Left colon (tissue), 2 donors: ENCODE measurements at regions of chr7 and their contacts with region 1.

Region 1: DNA sequence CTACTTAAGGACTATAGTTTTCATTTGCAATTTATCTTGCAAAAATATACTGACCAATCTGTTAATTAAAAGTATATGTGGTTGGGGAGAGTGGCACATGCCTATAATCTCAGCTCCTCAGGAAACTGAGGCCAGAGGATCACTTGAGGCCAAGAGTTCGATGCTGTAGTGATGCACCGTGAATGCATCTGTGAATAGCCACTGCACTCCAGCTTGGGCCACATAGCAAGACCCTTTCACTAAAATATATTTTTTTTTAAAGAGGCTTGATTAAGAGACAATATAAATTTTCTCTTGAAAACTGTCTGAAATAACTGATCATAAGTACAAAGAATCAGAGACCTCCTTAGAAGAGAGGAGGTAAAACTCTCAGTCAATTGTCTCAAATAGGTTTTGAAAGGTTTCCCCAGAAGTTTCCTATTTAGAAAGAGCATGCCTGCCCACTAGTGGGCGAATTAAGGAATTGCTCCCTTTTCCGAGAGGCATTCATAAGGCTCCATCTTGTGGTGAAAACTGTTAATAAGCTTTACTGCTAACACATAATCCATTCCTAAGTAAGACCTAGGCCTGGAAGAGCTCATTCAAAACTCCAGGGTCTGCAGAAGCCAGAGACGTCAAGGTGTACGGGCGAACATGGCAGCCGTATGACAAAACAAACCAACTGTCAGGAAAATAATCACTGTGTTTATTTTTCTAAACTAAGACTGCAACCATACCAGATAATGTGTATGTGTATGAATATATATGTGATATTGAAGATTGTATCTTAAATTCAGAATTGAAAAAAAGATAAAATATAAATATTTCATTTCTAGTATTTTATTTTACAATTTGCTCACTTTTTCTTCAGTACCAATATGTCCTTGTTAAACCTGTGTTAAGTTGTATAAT is 6.8 kb upstream of the TAS2R40 start:
- DNase-seq: peak; percentile 35 to 42
- ATAC-seq: peak; percentile 74

Region 2: DNA sequence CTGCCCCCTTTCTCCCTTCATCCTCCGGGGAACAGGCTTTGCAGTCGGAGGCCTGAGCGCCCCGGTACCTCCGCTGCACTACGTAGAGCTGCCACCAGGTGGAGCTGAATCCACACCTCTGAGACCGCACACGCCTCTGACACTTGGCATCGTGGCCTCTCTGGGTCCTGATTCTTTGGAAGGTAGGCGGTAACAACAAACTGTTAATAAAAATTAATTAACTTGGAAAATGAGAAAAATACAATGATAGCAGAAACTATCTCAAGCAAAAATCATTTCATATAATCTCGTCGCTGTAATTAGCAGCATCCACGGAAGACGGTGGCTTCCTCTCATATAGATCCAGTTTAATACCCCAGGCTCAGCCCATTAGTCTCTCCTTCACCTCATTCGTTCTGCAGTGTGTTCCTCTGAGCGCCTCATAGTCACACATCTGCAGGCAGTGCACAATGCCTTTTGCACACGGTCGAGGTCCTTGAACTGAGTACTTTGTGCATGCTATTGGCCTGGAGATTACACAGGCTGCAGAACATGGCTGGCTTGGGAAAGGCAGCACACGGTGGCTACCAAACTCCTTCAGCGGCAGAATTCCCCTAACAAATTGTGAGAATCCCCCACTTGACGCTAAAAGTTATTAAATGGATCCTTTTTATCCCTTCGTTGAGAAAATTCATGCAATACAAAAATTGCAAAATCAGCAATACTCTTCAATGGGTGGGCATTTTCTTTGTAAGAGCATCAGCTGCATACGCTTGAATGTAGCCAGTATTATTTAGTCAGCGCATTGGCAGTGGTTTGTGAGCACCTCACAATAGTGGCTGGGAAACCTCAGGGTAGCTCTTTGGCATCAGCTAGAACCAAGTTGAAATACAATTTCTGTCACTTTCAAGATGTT is 206.8 kb before region 1 on chr7:
- intact Hi-C with region 1: loop called (anchors 2 to 10 kb)
- DNase-seq: peak; percentile 42 to 84
- ATAC-seq: peak; percentile 89